Naive thymus-derived CD4-positive, alpha-beta T cell (primary cell): ENCODE measurements at regions of chr10 and their contacts with region 1.

Region 1: GRCh38 chr10:62492012-62492869 is 118.1 kb downstream of the ZNF365 start:
- DNase-seq: peak in 7 of 9 donors; percentile 14 to 53 (median 40)
- ATAC-seq: peak; percentile 54
- H3K4me3 ChIP-seq: no peak overlapping the region
- H3K4me3 Mint-ChIP-seq: no peak overlapping the region
- H3K27ac ChIP-seq: no peak overlapping the region
- H3K27ac Mint-ChIP-seq: no peak overlapping the region
- H3K4me1 ChIP-seq: no peaks in the 10 kb centered on the region
- H3K4me1 Mint-ChIP-seq: peaks cover 0 to 2% (median 0%) of the 10 kb centered on the region in 7 donors
- H3K27me3 ChIP-seq: no peaks in the 10 kb centered on the region
- H3K27me3 Mint-ChIP-seq: peaks cover 0 to 29% (median 4%) of the 10 kb centered on the region in 5 donors

Region 2: DNA sequence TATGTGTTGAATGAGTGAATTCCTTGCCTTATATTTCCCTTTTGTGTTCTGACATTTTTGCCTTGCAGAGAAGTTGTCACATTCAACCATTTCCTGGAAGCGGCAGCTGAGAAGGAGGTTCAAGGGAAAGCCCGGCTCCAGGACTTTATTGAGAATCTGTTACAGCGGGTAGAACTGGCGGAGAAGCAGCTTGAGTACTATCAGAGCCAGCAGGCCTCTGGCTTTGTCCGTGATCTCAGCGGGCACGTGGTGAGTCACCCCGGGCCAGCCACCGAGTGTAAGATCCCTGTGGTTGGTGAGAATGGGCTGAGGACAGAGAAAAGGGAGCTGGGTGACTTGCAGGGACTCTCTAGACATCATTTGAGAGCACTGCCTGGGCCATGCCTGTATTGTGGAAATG is 103.9 kb before region 1 on chr10:
- CTCF ChIA-PET with region 1: no interaction called
- POLR2A ChIA-PET with region 1: no interaction called
- intact Hi-C with region 1: no loop called
- DNase-seq: no peak
- ATAC-seq: no peak
- H3K4me3 ChIP-seq: no peak overlapping the region
- H3K4me3 Mint-ChIP-seq: no peak overlapping the region
- H3K27ac ChIP-seq: no peak overlapping the region
- H3K27ac Mint-ChIP-seq: no peak overlapping the region
- H3K4me1 ChIP-seq: peaks cover 0 to 17% of the 10 kb centered on the region in 2 donors
- H3K4me1 Mint-ChIP-seq: peaks cover 0 to 8% (median 0%) of the 10 kb centered on the region in 7 donors
- H3K27me3 ChIP-seq: no peaks in the 10 kb centered on the region
- H3K27me3 Mint-ChIP-seq: peaks cover 0 to 19% (median under 1%) of the 10 kb centered on the region in 5 donors

Region 3: GRCh38 chr10:62437696-62438095 is 54.5 kb before region 1 on chr10:
- CTCF ChIA-PET with region 1: interaction called, 6 read pairs
- POLR2A ChIA-PET with region 1: no interaction called
- intact Hi-C with region 1: loop called in 1 of 2 experiments (anchors 2 kb)
- DNase-seq: peak in 7 of 9 donors; percentile 42 to 71 (median 65)
- ATAC-seq: peak; percentile 79
- H3K4me3 ChIP-seq: no peak overlapping the region
- H3K4me3 Mint-ChIP-seq: no peak overlapping the region
- H3K27ac ChIP-seq: no peak overlapping the region
- H3K27ac Mint-ChIP-seq: no peak overlapping the region
- H3K4me1 ChIP-seq: no peaks in the 10 kb centered on the region
- H3K4me1 Mint-ChIP-seq: peaks cover 0 to 12% (median 3%) of the 10 kb centered on the region in 7 donors
- H3K27me3 ChIP-seq: no peaks in the 10 kb centered on the region
- H3K27me3 Mint-ChIP-seq: peaks cover 0 to 24% (median 4%) of the 10 kb centered on the region in 5 donors

Region 4: GRCh38 chr10:62554632-62555199 is 62.5 kb after region 1 on chr10:
- CTCF ChIA-PET with region 1: no interaction called
- POLR2A ChIA-PET with region 1: no interaction called
- intact Hi-C with region 1: loop called in 1 of 2 experiments (anchors 2 kb)
- DNase-seq: peak in 7 of 9 donors; percentile 8 to 34 (median 24)
- ATAC-seq: peak; percentile 67
- H3K4me3 ChIP-seq: no peak overlapping the region
- H3K4me3 Mint-ChIP-seq: no peak overlapping the region
- H3K27ac ChIP-seq: no peak overlapping the region
- H3K27ac Mint-ChIP-seq: no peak overlapping the region
- H3K4me1 ChIP-seq: no peaks in the 10 kb centered on the region
- H3K4me1 Mint-ChIP-seq: no peaks in the 10 kb centered on the region
- H3K27me3 ChIP-seq: no peaks in the 10 kb centered on the region
- H3K27me3 Mint-ChIP-seq: peaks cover 4 to 34% (median 11%) of the 10 kb centered on the region in 5 donors

Region 5: DNA sequence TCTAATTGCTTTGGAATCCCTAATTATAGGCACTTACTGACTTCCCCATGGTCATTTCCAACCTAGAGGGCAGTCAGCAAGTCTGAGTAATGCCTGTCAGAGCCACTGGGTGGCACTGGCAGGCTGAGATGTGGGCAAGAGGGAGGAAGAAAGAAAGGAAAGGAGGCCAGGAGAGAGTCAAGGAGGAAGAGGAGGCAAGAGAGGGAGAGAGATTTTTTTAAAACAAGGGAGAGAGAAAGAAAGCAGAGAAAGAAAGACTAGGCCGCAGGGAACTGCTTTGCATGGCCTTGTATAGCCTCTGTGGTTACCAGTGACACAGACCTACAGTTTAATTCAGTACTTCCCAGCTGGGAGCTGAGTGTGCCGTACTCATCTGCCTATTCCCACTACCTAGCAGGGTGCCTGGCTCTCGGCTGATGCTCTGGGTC is 101.9 kb after region 1 on chr10:
- CTCF ChIA-PET with region 1: interaction called, 10 read pairs
- POLR2A ChIA-PET with region 1: no interaction called
- intact Hi-C with region 1: loop called (anchors 1 kb)
- DNase-seq: peak in 8 of 9 donors; percentile 22 to 58 (median 40)
- ATAC-seq: peak; percentile 84
- H3K4me3 ChIP-seq: no peak overlapping the region
- H3K4me3 Mint-ChIP-seq: no peak overlapping the region
- H3K27ac ChIP-seq: no peak overlapping the region
- H3K27ac Mint-ChIP-seq: no peak overlapping the region
- H3K4me1 ChIP-seq: no peaks in the 10 kb centered on the region
- H3K4me1 Mint-ChIP-seq: peaks cover 0 to 4% (median 0%) of the 10 kb centered on the region in 7 donors
- H3K27me3 ChIP-seq: no peaks in the 10 kb centered on the region
- H3K27me3 Mint-ChIP-seq: peaks cover 0 to 26% (median 10%) of the 10 kb centered on the region in 5 donors